MCF 10A (cell line): ENCODE measurements at regions of chr1 and their contacts with region 1.

Region 1: DNA sequence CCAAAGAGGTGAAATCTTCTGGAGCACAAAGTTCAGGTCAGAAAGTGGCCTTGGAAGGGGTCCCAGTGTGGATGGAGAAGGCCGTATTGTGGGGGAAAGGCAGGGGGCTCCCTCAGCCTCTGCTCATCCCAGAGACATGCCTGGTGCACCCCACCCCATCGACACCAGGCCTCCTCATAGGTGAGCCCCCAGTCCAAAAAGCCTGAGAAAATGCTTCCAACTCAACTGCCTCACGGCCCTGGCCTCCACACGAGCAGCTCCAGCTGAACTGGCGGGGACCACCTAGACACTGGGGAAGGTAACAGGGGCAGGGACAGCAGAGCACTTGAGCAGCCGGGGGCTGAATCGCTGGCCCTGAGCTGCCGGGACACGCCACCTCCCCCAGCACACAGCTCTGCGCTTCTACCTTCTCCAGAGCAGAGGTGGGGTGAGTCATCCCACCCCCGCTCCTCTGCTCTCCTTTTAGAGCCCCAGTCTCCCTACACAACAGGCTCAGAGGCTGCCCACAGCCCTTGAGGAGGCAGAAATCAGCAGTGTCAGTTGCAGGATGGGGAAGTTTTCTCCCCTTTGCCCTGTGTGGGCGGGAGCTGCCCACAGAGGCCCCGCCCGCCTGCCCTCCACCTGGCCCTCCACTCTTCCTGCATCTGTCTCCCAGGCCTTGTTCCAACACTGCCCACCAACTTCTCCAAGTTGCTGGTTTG is 94.5 kb downstream of the STUM start:
- DNase-seq: peak; percentile 95
- H3K4me3 Mint-ChIP-seq: no peak overlapping the region
- H3K27ac Mint-ChIP-seq: peak overlapping the region; percentile 43
- H3K4me1 Mint-ChIP-seq: peaks cover 9% of the 10 kb centered on the region
- H3K27me3 Mint-ChIP-seq: no peaks in the 10 kb centered on the region
- CTCF ChIP-seq: no peak

Region 2: DNA sequence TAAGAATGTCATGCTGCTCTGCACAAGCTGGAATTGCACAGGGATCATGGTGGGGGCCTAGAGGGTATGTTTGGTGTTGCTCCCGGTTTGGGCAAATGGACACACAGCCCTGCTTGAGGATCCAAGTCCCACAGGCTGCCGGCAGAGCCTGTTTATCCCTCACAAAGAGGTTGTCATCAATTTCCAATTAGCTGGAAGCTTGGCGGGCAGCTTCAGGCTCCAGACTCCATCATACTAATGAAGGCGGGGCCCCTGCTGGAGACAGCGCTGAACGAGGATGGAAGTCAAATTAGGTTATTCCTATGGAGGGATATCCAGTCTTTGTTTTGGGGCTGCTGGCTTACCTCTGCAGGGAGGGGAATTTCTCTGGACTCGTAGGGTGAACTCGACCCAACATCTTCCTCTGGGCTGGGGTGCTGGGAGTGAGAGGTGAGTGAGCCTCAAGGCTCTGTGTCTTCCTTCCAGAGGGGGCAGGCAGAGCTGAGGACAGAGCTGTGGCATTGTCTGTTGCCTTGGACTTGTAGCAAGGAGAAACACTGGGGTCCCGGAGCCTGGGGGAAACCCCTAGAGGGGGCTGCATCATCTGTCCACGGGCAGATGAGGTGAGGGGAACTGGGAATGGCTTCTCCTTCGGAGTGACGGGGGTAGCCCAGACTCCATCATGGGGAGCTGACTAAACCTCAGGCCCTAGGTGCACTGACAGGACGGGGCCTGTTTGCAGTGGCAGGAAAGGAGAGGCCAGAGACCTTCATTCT is 210.3 kb before region 1 on chr1:
- CTCF ChIA-PET with region 1: no interaction called
- POLR2A ChIA-PET with region 1: no interaction called
- intact Hi-C with region 1: no loop called
- DNase-seq: no peak
- H3K4me3 Mint-ChIP-seq: no peak overlapping the region
- H3K27ac Mint-ChIP-seq: no peak overlapping the region
- H3K4me1 Mint-ChIP-seq: peaks cover 6% of the 10 kb centered on the region
- H3K27me3 Mint-ChIP-seq: peaks cover 16% of the 10 kb centered on the region
- CTCF ChIP-seq: no peak

Region 3: GRCh38 chr1:226679853-226680516 is 37.0 kb after region 1 on chr1:
- CTCF ChIA-PET with region 1: interaction called, 3 read pairs
- POLR2A ChIA-PET with region 1: interaction called, 3 read pairs
- intact Hi-C with region 1: loop called (anchors 2 kb)
- DNase-seq: no peak
- H3K4me3 Mint-ChIP-seq: no peak overlapping the region
- H3K27ac Mint-ChIP-seq: no peak overlapping the region
- H3K4me1 Mint-ChIP-seq: peaks cover 24% of the 10 kb centered on the region
- H3K27me3 Mint-ChIP-seq: no peaks in the 10 kb centered on the region
- CTCF ChIP-seq: no peak

Region 4: GRCh38 chr1:226827968-226828513 is 185.0 kb after region 1 on chr1:
- CTCF ChIA-PET with region 1: interaction called, 342 read pairs
- POLR2A ChIA-PET with region 1: interaction called, 3 read pairs
- intact Hi-C with region 1: no loop called
- DNase-seq: peak; percentile 100
- H3K4me3 Mint-ChIP-seq: no peak overlapping the region
- H3K27ac Mint-ChIP-seq: no peak overlapping the region
- H3K4me1 Mint-ChIP-seq: no peaks in the 10 kb centered on the region
- H3K27me3 Mint-ChIP-seq: no peaks in the 10 kb centered on the region
- CTCF ChIP-seq: peak; percentile 100

Region 5: GRCh38 chr1:227072991-227073390 is 430.0 kb after region 1 on chr1:
- CTCF ChIA-PET with region 1: no interaction called
- POLR2A ChIA-PET with region 1: no interaction called
- intact Hi-C with region 1: no loop called
- DNase-seq: peak; percentile 60
- H3K4me3 Mint-ChIP-seq: no peak overlapping the region
- H3K27ac Mint-ChIP-seq: peak overlapping the region; percentile 67
- H3K4me1 Mint-ChIP-seq: peaks cover 10% of the 10 kb centered on the region
- H3K27me3 Mint-ChIP-seq: no peaks in the 10 kb centered on the region
- CTCF ChIP-seq: no peak